ENCODE measurements at regions of chr4 and their contacts with region 1.

Region 1: DNA sequence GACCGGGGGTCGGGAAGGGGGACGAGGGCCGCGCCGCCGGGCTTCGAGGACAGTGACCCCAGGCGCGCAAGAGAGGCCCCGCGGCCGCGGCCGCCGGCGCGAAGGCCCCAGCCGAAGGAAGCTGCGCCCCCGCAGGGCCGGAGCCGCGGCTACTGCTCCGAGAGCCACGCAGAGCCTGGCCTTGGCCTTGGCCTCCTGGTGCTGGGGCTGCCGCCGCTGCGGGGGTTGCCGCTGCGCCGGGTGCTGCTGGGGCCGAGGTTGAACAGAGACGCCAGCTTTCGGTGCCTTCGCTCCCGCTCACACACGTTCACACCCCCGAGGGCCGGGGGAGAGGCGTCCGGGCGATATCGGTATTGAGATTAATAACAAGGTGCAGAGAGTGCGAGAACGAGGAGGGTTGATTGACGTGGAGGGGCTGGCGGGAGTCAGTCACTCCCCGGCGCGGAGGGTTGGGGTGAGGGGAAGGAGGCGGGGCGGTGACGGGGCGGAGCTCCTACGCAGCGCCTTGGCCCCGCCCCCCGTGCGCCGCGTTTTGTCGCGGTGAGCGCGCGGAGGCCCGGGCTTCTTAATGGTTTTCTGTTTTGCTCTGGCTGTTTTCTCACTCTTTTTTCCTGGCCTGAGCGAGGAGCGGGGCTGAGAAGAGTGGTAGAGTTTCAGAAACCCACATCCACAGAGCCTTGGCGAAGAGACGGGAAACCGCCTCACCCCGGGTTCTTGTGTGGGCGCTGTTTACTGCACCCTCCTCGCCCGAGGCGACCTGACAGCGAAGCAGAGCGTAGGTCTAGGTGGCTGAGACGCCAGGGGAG is 878 bp upstream of the CNOT6L start:
- DNase-seq: peak; percentile 96
- H3K4me3 Mint-ChIP-seq: peak overlapping the region; percentile 95
- H3K27ac Mint-ChIP-seq: peak overlapping the region; percentile 100
- H3K4me1 Mint-ChIP-seq: peaks cover 49% of the 10 kb centered on the region
- H3K27me3 Mint-ChIP-seq: peaks cover 4% of the 10 kb centered on the region

Region 2: GRCh38 chr4:77800483-77801259 is 19.4 kb before region 1 on chr4:
- CTCF ChIA-PET with region 1: interaction called, 12 read pairs
- DNase-seq: no peak
- H3K4me3 Mint-ChIP-seq: peak overlapping the region; percentile 50
- H3K27ac Mint-ChIP-seq: peak overlapping the region; percentile 85
- H3K4me1 Mint-ChIP-seq: peaks cover 62% of the 10 kb centered on the region
- H3K27me3 Mint-ChIP-seq: no peaks in the 10 kb centered on the region

Region 3: DNA sequence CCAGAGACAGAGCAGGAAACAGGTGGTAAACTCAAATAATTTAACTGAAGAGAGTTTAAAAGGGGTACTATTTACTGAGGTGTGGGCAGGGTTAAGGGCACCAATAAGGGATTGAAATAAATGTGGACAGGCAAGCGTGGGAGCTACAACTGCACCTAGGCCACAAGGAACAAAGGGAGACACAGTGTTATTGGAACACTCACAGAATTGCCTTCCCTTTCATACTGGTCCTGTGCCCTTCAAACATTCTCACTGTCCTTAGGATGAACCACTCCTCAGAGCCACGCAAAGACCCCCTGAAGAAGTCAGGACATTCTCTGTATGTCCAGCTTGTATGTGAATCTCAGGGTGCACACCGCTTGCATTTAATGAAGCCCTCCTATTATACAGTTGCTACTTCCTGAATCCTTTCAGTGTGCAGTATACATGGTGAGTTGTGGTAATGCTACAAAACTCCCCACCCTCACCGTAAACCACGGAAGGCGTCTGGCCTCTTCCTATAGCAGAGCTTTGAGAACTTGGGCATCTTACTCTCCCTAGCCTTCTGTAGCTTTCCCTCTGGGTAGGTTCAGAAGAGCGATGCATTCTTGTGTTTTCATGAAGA is 32.9 kb after region 1 on chr4:
- CTCF ChIA-PET with region 1: interaction called, 13 read pairs
- DNase-seq: peak; percentile 82
- H3K4me3 Mint-ChIP-seq: peak overlapping the region; percentile 63
- H3K27ac Mint-ChIP-seq: peak overlapping the region; percentile 96
- H3K4me1 Mint-ChIP-seq: peaks cover 63% of the 10 kb centered on the region
- H3K27me3 Mint-ChIP-seq: no peaks in the 10 kb centered on the region

Region 4: DNA sequence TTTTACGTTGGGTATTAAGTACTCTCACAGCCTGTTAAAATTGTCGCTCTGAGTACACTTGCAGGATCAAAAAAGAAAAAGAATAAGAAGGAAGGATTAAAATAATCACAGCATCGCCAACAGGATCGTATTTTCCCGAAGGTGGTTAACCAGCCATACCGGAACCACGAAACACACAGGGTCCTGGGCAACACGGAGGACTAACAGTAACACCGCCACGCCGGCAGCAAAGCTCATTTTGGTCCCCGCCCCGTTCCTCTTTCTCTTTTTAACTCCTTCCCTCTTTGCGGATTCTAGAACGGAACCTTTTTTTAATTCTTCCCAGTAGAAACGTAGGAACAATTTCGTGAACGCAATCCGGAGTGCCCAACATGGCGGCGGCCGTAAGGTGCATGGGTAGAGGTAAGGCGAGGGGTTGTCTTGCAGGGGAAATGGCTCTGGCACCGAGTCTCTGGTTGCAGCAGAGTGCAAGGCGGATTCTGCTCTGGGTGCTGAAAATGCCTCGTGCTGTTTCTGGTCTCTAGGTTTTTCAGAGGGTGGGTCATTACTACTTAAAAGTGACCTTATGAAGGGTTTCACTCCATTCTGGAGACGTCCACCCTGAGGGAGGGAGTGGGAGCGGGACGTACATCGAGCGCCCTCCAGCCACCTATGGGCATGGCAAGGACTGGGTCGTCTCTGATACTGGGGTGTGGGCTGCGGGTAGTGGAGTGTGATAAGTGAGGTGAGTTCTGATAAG is 42.6 kb after region 1 on chr4 and contains the start of gene MRPL1:
- CTCF ChIA-PET with region 1: interaction called, 19 read pairs
- DNase-seq: peak; percentile 91
- H3K4me3 Mint-ChIP-seq: peak within 1 kb of the TSS; percentile 96
- H3K27ac Mint-ChIP-seq: peak within 1 kb of the TSS; percentile 100
- H3K4me1 Mint-ChIP-seq: peaks cover 66% of the 10 kb centered on the region
- H3K27me3 Mint-ChIP-seq: no peaks in the 10 kb centered on the region

Region 5: GRCh38 chr4:78079726-78080430 is 259.8 kb after region 1 on chr4:
- CTCF ChIA-PET with region 1: no interaction called
- DNase-seq: no peak
- H3K4me3 Mint-ChIP-seq: no peak overlapping the region
- H3K27ac Mint-ChIP-seq: no peak overlapping the region
- H3K4me1 Mint-ChIP-seq: no peaks in the 10 kb centered on the region
- H3K27me3 Mint-ChIP-seq: peaks cover 14% of the 10 kb centered on the region

Measured in activated naive CD4-positive, alpha-beta T cell treated with anti-CD3 and anti-CD28 coated beads, Interleukin-2, amount 10 ng/mL, durations not matched to agents 7 days and 5 days (primary cell).